T-cell (primary cell): ENCODE measurements at regions of chr9 and their contacts with region 1.

Region 1: GRCh38 chr9:6757456-6758247 is at the start of gene KDM4C:
- DNase-seq: peak; percentile 87 to 97 (median 94)
- ATAC-seq: peak; percentile 83 to 87 (median 84)
- H3K4me3 ChIP-seq: peak within 1 kb of the TSS; percentile 72 to 92
- H3K4me3 Mint-ChIP-seq: peak within 1 kb of the TSS; percentile 93 to 98 (median 94)
- H3K27ac ChIP-seq: peak within 1 kb of the TSS; percentile 93
- H3K27ac Mint-ChIP-seq: peak within 1 kb of the TSS; percentile 99
- H3K4me1 ChIP-seq: peaks cover 4 to 24% of the 10 kb centered on the region in 2 experiments
- H3K4me1 Mint-ChIP-seq: peaks cover 29 to 36% (median 33%) of the 10 kb centered on the region in 3 donors
- H3K27me3 ChIP-seq: no peaks in the 10 kb centered on the region
- H3K27me3 Mint-ChIP-seq: no peaks in the 10 kb centered on the region
- total RNA-seq, gene KDM4C: 66.4 to 107 (median 76.0) TPM

Region 2: GRCh38 chr9:6080154-6080716 is 677.4 kb before region 1 on chr9:
- CTCF ChIA-PET with region 1: interaction called in 1 of 2 experiments, 4 read pairs
- POLR2A ChIA-PET with region 1: interaction called in 1 of 2 experiments, 11 read pairs
- DNase-seq: peak; percentile 36 to 82 (median 57)
- ATAC-seq: peak; percentile 84 to 94 (median 90)
- H3K4me3 ChIP-seq: peak overlapping the region; percentile 4 to 50
- H3K4me3 Mint-ChIP-seq: peak overlapping the region; percentile 83 to 88 (median 85)
- H3K27ac ChIP-seq: peak overlapping the region; percentile 50
- H3K27ac Mint-ChIP-seq: peak overlapping the region; percentile 61 to 87
- H3K4me1 ChIP-seq: peaks cover 0 to 11% of the 10 kb centered on the region in 2 experiments
- H3K4me1 Mint-ChIP-seq: peaks cover 7 to 14% (median 8%) of the 10 kb centered on the region in 3 donors
- H3K27me3 ChIP-seq: peaks cover 0 to 2% of the 10 kb centered on the region in 2 experiments
- H3K27me3 Mint-ChIP-seq: peaks cover 2 to 4% of the 10 kb centered on the region in 2 donors

Region 3: GRCh38 chr9:6681147-6681956 is 76.3 kb before region 1 on chr9:
- CTCF ChIA-PET with region 1: interaction called, 3 to 10 read pairs
- POLR2A ChIA-PET with region 1: interaction called, 9 to 27 read pairs
- DNase-seq: peak; percentile 79 to 94 (median 88)
- ATAC-seq: peak; percentile 87 to 93 (median 90)
- H3K4me3 ChIP-seq: peak overlapping the region; percentile 79 to 93
- H3K4me3 Mint-ChIP-seq: peak overlapping the region; percentile 91 to 93 (median 91)
- H3K27ac ChIP-seq: peak overlapping the region; percentile 98
- H3K27ac Mint-ChIP-seq: peak overlapping the region; percentile 98
- H3K4me1 ChIP-seq: peaks cover 15 to 21% of the 10 kb centered on the region in 2 experiments
- H3K4me1 Mint-ChIP-seq: peaks cover 19 to 24% (median 22%) of the 10 kb centered on the region in 3 donors
- H3K27me3 ChIP-seq: no peaks in the 10 kb centered on the region
- H3K27me3 Mint-ChIP-seq: no peaks in the 10 kb centered on the region

Region 4: DNA sequence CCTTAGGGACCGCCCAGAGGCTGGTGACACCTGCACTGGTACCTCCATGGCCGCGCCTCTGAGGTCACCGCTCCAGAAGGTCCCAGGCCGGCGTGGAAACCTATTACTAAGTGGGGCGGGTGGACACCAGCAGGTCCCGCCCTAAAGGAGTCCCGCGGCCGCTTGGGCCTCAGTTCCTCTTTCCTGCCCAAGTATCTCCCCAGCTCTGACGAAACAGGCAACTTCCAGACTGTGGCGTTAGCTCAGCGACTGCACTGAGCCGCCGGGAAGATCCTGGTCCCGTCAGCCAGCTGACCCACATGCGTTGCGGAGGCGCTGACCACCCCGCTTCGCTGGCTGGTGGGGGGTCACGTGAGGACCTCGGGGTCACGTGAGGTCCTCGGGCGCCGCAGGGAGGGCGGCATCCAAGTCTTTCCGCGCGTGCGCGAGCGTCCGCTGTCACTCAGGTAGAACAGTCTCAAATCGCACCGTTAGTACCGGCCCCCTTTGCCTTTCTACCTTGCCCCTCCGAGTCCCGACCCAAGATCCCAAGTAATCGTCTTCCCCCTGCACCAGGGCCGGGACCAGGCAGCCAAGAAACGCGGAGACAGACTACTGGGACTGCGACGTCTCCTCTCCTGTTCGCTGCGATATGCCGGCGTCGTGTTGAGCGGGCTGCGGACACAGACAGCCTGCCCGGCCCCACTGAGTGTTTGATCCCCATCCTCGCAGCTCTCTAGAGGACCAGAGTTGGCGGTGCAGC is 53.6 kb before region 1 on chr9:
- CTCF ChIA-PET with region 1: no interaction called
- POLR2A ChIA-PET with region 1: interaction called, 5 to 14 read pairs
- DNase-seq: peak in 34 of 35 experiments; percentile 53 to 92 (median 80)
- ATAC-seq: peak; percentile 88 to 92 (median 92)
- H3K4me3 ChIP-seq: peak overlapping the region; percentile 82 to 96
- H3K4me3 Mint-ChIP-seq: peak overlapping the region; percentile 88 to 97 (median 93)
- H3K27ac ChIP-seq: peak overlapping the region; percentile 96
- H3K27ac Mint-ChIP-seq: peak overlapping the region; percentile 94 to 97
- H3K4me1 ChIP-seq: peaks cover 5 to 13% of the 10 kb centered on the region in 2 experiments
- H3K4me1 Mint-ChIP-seq: peaks cover 13 to 19% (median 16%) of the 10 kb centered on the region in 3 donors
- H3K27me3 ChIP-seq: no peaks in the 10 kb centered on the region
- H3K27me3 Mint-ChIP-seq: no peaks in the 10 kb centered on the region

Region 5: DNA sequence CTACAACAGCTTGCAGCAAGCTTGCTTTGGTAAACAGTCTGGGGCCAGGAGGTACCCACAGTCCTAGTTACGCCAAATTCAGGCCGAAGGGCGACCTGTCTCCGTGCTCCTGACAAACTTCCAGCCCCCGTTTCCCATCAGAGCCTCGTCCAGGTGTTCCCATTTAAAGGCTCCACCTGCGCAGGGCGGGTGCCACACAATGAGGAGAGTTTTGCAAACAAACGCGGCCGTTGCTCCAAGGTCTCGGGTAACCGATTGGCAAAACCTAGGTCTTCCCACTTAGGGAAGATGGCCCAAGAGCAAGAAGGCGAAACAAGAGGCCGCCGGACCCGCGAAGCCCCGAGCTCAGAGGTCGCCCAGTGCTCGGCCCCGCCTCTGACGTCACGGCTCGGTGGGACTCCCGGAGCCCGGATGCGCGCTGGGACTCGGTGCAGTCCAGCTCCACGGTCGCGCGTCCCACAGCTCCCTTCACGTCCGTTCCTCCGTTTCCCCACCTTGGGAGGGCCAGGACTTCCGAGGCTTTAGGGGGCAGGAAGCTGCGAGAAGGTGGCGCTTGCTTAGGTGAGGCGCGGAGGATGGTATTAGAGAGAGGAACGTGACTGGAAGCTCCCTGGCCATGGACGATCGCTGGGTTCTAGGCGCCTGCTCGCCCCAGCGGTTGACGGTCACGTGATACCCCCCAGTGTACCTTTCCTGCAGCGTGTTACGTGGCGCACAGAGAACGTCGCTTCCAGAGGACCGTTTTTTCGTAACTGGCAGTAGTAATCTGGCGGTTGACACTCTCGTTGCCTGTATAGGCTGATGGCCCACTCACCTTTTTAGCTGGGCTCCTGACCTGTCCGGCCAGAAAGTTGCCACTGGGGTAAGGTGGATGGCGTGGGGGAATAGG is 41.7 kb before region 1 on chr9:
- CTCF ChIA-PET with region 1: interaction called in 1 of 2 experiments, 6 read pairs
- POLR2A ChIA-PET with region 1: interaction called in 1 of 2 experiments, 22 read pairs
- DNase-seq: peak; percentile 7 to 80 (median 54)
- ATAC-seq: peak; percentile 87 to 90 (median 88)
- H3K4me3 ChIP-seq: peak overlapping the region; percentile 61 to 66
- H3K4me3 Mint-ChIP-seq: peak overlapping the region; percentile 80 to 87 (median 81)
- H3K27ac ChIP-seq: peak overlapping the region; percentile 63
- H3K27ac Mint-ChIP-seq: peak overlapping the region; percentile 87 to 90
- H3K4me1 ChIP-seq: peaks cover 0 to 17% of the 10 kb centered on the region in 2 experiments
- H3K4me1 Mint-ChIP-seq: peaks cover 8 to 11% (median 10%) of the 10 kb centered on the region in 3 donors
- H3K27me3 ChIP-seq: peaks cover 0 to 8% of the 10 kb centered on the region in 2 experiments
- H3K27me3 Mint-ChIP-seq: no peaks in the 10 kb centered on the region

Region 6: DNA sequence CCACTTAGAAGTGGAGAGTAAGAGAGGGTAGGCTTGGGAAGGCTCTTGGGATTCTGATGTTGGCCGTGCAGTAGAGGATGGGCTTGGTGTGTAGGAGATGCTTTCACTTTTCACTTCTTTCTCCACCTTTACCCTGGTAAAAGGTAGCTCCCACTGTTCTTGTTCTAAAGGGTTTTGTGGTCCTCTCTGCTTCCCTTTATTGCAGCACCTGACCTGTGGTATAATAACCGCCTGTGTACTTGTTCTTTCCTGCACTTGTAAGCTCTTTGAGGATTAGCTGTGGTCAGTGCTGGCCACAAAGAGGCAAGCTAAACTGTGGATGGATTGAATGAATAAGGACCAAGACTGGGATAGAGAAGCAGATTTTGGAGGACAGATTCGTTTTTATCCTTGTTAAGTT is 25.3 kb after region 1 on chr9:
- CTCF ChIA-PET with region 1: interaction called in 1 of 2 experiments, 4 read pairs
- POLR2A ChIA-PET with region 1: interaction called in 1 of 2 experiments, 12 read pairs
- DNase-seq: no peak
- ATAC-seq: peak in 1 of 4 experiments; percentile 51
- H3K4me3 ChIP-seq: no peak overlapping the region
- H3K4me3 Mint-ChIP-seq: peak overlapping the region in 2 of 3 donors; percentile 37 to 67
- H3K27ac ChIP-seq: no peak overlapping the region
- H3K27ac Mint-ChIP-seq: peak overlapping the region; percentile 29 to 53
- H3K4me1 ChIP-seq: peaks cover 23 to 44% of the 10 kb centered on the region in 2 experiments
- H3K4me1 Mint-ChIP-seq: peaks cover 80 to 88% (median 82%) of the 10 kb centered on the region in 3 donors
- H3K27me3 ChIP-seq: no peaks in the 10 kb centered on the region
- H3K27me3 Mint-ChIP-seq: no peaks in the 10 kb centered on the region

Region 7: DNA sequence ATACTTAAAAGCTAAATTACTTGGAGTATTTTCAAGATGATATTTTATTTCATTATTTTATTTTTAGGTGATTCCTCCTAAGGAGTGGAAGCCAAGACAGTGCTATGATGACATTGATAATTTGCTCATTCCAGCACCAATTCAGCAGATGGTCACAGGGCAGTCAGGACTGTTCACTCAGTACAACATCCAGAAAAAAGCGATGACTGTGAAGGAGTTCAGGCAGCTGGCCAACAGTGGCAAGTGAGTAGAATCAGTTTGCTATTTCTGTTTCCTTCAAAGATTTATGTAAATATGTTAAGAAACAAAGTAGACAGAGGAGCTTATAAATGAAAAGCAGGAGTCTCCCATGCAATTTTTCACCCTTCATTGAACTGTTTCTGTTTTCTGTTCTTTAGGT is 47.9 kb after region 1 on chr9:
- CTCF ChIA-PET with region 1: no interaction called
- POLR2A ChIA-PET with region 1: no interaction called
- DNase-seq: no peak
- ATAC-seq: no peak
- H3K4me3 ChIP-seq: no peak overlapping the region
- H3K4me3 Mint-ChIP-seq: no peak overlapping the region
- H3K27ac ChIP-seq: no peak overlapping the region
- H3K27ac Mint-ChIP-seq: no peak overlapping the region
- H3K4me1 ChIP-seq: no peaks in the 10 kb centered on the region
- H3K4me1 Mint-ChIP-seq: peaks cover 0 to 5% (median 3%) of the 10 kb centered on the region in 3 donors
- H3K27me3 ChIP-seq: no peaks in the 10 kb centered on the region
- H3K27me3 Mint-ChIP-seq: no peaks in the 10 kb centered on the region

Region 8: DNA sequence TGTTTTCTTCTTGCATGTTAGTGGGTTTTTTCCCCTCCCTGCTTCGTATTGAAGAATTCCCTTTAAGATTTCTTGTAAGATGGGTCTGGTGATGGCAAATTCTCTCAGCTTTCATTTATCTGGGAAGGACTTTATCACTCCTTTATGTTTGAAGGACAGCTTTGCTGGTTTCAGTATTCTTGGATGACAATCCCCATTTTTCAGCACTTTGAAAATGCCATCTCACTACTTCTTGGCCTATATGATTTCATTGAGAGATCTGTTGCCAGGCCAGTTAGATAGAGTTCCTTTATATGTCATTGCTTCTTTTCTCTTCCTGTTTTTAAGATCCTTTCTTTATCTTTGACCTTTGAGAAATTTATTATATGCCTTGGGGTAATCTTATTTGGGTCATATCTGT is 106.5 kb after region 1 on chr9:
- CTCF ChIA-PET with region 1: no interaction called
- POLR2A ChIA-PET with region 1: no interaction called
- DNase-seq: no peak
- ATAC-seq: no peak
- H3K4me3 ChIP-seq: no peak overlapping the region
- H3K4me3 Mint-ChIP-seq: no peak overlapping the region
- H3K27ac ChIP-seq: no peak overlapping the region
- H3K27ac Mint-ChIP-seq: no peak overlapping the region
- H3K4me1 ChIP-seq: no peaks in the 10 kb centered on the region
- H3K4me1 Mint-ChIP-seq: peaks cover 21 to 29% (median 27%) of the 10 kb centered on the region in 3 donors
- H3K27me3 ChIP-seq: no peaks in the 10 kb centered on the region
- H3K27me3 Mint-ChIP-seq: no peaks in the 10 kb centered on the region